CD8-positive, alpha-beta T cell (primary cell): ENCODE measurements at regions of chr15 and their contacts with region 1.

Region 1: GRCh38 chr15:50496692-50497091 is 49.8 kb downstream of the USP50 start:
- DNase-seq: no peak
- ATAC-seq: no peak
- H3K4me3 ChIP-seq: no peak overlapping the region
- H3K4me3 Mint-ChIP-seq: no peak overlapping the region
- H3K27ac ChIP-seq: peak overlapping the region in 1 of 2 experiments; percentile 25
- H3K27ac Mint-ChIP-seq: peak overlapping the region; percentile 46
- H3K4me1 ChIP-seq: no peaks in the 10 kb centered on the region
- H3K4me1 Mint-ChIP-seq: no peaks in the 10 kb centered on the region
- H3K27me3 ChIP-seq: no peaks in the 10 kb centered on the region
- H3K27me3 Mint-ChIP-seq: no peaks in the 10 kb centered on the region
- CTCF ChIP-seq: no peak

Region 2: DNA sequence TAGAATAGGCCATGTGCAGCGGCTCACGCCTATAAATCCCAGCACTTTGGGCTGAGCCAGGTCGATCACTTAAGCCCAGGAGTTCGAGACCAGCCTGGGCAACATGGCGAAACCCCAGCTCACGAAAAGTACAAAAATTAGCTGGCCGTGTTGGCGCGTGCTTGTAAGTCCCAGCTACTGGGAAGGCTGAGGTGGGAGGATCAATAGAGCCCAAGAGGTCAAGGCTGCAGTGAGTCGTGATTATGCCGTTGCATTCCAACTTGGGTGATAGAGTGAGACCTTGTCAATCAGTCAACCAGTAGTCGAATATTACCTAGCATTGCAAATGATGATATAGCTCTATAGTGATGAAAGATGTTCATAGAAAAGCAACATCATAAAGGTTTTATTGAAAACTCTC is 20.5 kb before region 1 on chr15:
- CTCF ChIA-PET with region 1: no interaction called
- POLR2A ChIA-PET with region 1: no interaction called
- intact Hi-C with region 1: loop called in 1 of 2 experiments (anchors 2 kb)
- DNase-seq: no peak
- ATAC-seq: no peak
- H3K4me3 ChIP-seq: no peak overlapping the region
- H3K4me3 Mint-ChIP-seq: no peak overlapping the region
- H3K27ac ChIP-seq: no peak overlapping the region
- H3K27ac Mint-ChIP-seq: no peak overlapping the region
- H3K4me1 ChIP-seq: no peaks in the 10 kb centered on the region
- H3K4me1 Mint-ChIP-seq: peaks cover 2% of the 10 kb centered on the region
- H3K27me3 ChIP-seq: no peaks in the 10 kb centered on the region
- H3K27me3 Mint-ChIP-seq: no peaks in the 10 kb centered on the region
- CTCF ChIP-seq: no peak

Region 3: GRCh38 chr15:50576166-50576565 is 79.5 kb after region 1 on chr15:
- CTCF ChIA-PET with region 1: no interaction called
- POLR2A ChIA-PET with region 1: no interaction called
- intact Hi-C with region 1: loop called in 1 of 2 experiments (anchors 10 kb)
- DNase-seq: no peak
- ATAC-seq: no peak
- H3K4me3 ChIP-seq: no peak overlapping the region
- H3K4me3 Mint-ChIP-seq: no peak overlapping the region
- H3K27ac ChIP-seq: no peak overlapping the region
- H3K27ac Mint-ChIP-seq: peak overlapping the region; percentile 12
- H3K4me1 ChIP-seq: no peaks in the 10 kb centered on the region
- H3K4me1 Mint-ChIP-seq: no peaks in the 10 kb centered on the region
- H3K27me3 ChIP-seq: no peaks in the 10 kb centered on the region
- H3K27me3 Mint-ChIP-seq: no peaks in the 10 kb centered on the region
- CTCF ChIP-seq: no peak

Region 4: DNA sequence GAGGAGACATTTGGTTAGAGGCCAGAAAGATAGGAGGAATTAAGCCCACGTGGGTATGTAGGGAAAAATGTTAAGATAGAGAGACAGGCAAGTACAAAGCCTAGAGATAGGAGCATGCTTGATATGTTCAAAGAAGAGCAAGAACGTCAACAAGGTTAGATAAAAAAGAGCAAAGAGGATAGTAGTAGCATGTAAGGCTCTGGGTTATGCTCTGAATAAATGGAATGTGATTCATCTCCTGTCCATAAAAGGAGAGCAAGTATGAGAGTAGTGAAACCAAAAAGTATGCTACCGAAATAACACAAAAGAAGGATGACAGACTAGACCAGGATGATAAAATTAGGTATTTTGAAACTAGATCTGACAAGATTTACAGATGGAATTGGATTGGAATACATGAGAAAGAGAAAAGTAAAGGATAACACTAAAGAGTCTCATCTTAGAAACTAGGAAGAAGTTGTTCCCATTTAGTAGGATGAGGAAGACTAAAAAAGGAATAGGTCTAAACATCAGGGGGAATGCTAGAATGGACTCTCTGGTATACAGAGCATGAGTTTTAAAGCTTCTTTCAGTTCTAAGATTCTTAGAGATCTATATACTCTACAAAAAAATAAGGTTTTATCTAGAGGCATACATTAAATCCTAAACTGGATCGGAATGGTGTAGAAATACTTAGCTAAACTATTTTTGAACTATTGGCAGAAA is 130.8 kb after region 1 on chr15:
- CTCF ChIA-PET with region 1: no interaction called
- POLR2A ChIA-PET with region 1: no interaction called
- intact Hi-C with region 1: no loop called
- DNase-seq: no peak
- ATAC-seq: no peak
- H3K4me3 ChIP-seq: no peak overlapping the region
- H3K4me3 Mint-ChIP-seq: no peak overlapping the region
- H3K27ac ChIP-seq: no peak overlapping the region
- H3K27ac Mint-ChIP-seq: no peak overlapping the region
- H3K4me1 ChIP-seq: no peaks in the 10 kb centered on the region
- H3K4me1 Mint-ChIP-seq: no peaks in the 10 kb centered on the region
- H3K27me3 ChIP-seq: no peaks in the 10 kb centered on the region
- H3K27me3 Mint-ChIP-seq: no peaks in the 10 kb centered on the region
- CTCF ChIP-seq: no peak